Activated naive CD4-positive, alpha-beta T cell treated with anti-CD3 and anti-CD28 coated beads for 36 hours (primary cell): ENCODE measurements at regions of chr3 and their contacts with region 1.

Region 1: GRCh38 chr3:36843065-36844051 is 79.0 kb upstream of the DCLK3 start:
- DNase-seq: peak; percentile 91
- H3K4me3 Mint-ChIP-seq: no peak overlapping the region
- H3K27ac Mint-ChIP-seq: peak overlapping the region; percentile 2
- H3K4me1 Mint-ChIP-seq: peaks cover 17% of the 10 kb centered on the region
- H3K27me3 Mint-ChIP-seq: no peaks in the 10 kb centered on the region

Region 2: DNA sequence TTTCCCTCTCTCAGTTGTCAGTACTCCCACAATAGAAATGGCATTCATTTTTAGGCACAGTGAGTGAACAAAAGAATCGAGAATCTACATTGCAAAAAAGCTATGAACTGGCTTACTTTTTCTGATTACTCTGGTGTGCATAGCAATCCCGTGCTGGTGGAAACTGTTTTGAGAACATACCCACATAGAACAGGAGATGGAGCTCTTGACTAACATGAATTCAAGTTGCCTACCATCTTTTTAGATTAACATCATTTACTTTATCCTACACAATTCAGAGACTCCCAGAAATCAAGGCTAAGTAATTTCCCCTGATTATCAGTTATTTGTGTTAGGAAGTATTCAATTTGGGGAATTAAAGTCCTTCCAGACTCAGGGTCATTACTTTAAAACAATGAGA is 877.5 kb before region 1 on chr3:
- CTCF ChIA-PET with region 1: no interaction called
- intact Hi-C with region 1: loop called (anchors 10 kb)
- DNase-seq: no peak
- H3K4me3 Mint-ChIP-seq: no peak overlapping the region
- H3K27ac Mint-ChIP-seq: no peak overlapping the region
- H3K4me1 Mint-ChIP-seq: peaks cover 2% of the 10 kb centered on the region
- H3K27me3 Mint-ChIP-seq: no peaks in the 10 kb centered on the region

Region 3: GRCh38 chr3:36729204-36730056 is 113.9 kb before region 1 on chr3:
- CTCF ChIA-PET with region 1: no interaction called
- intact Hi-C with region 1: loop called (anchors 1 kb)
- DNase-seq: no peak
- H3K4me3 Mint-ChIP-seq: no peak overlapping the region
- H3K27ac Mint-ChIP-seq: no peak overlapping the region
- H3K4me1 Mint-ChIP-seq: no peaks in the 10 kb centered on the region
- H3K27me3 Mint-ChIP-seq: peaks cover 7% of the 10 kb centered on the region

Region 4: DNA sequence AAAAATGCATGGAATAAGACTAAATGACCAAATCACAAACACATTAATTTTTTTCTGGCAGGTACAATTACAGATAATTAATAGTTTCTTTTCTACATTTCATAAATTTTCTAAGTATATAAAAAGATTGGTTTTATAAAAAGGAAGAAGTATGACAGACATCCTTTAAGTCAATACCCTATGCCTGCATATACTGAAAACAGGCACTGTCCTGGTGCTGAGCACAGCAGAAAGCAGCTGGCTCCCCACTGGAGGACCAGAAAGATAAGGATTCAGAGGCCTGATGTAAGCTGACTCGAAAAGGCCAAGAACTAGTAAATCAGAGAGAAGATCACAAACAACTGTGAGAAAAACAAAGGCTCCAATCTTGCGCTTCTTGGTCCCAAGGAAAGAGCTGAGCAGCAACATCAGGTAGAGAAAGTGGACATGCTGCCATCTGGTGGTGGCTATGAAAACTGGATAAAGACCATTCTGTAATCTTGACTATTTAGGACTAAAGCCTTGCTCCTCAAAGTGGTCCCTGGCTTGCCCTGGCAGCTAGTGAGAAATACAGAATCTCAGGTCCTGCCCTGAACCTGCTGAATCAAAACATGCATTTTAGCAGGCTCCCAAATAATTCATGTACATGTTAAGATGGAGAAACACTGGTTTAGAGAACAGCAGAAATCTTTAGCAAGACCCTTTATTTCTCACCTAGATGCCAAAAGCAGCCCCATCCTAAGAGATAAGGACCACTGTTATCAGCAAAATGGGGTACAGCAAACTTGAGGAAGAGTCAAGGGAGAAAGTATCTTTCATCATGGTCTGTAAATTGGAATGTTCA is 25.5 kb after region 1 on chr3:
- CTCF ChIA-PET with region 1: interaction called, 8 read pairs
- intact Hi-C with region 1: loop called (anchors 1 kb)
- DNase-seq: peak; percentile 69
- H3K4me3 Mint-ChIP-seq: peak overlapping the region; percentile 13
- H3K27ac Mint-ChIP-seq: no peak overlapping the region
- H3K4me1 Mint-ChIP-seq: peaks cover 23% of the 10 kb centered on the region
- H3K27me3 Mint-ChIP-seq: no peaks in the 10 kb centered on the region